ENCODE measurements at regions of chr19 and their contacts with region 1.

Region 1: DNA sequence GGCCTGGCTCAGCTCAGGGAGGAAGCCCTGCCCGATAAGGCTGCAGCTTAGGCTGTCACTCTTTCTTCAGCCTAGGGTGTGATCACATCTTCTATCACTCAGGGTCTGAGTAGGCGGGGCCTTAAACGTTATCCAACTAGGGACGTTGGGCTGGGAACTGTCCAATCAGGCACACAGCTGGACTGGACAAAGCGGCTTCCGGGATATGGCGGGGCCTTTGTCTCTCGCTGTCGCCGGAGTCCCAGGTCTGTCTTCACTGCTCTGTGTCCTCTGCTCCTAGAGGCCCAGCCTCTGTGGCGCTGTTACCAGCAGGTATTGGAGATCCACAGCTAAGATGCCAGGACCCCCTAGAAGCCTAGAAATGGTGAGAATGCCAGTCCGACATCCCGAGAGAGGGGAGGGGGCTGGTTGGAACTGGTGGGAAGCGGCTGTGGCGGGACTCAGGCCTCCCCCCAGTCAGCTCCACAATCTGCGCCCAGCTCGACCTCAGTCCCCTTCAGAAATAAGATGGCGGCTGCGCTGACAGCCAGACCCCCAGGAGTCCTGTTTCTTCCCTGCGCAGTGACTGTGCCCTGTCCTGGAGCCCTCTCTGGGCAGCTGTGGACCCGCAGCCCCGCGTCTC is at the start of gene ZNF254:
- DNase-seq: peak; percentile 96 to 99 (median 98)
- H3K4me3 ChIP-seq: peak within 1 kb of the TSS; percentile 84 to 97 (median 91)
- H3K27ac ChIP-seq: peak within 1 kb of the TSS; percentile 92 to 96
- H3K4me1 ChIP-seq: peaks cover 0 to 9% (median 5%) of the 10 kb centered on the region in 4 experiments
- H3K27me3 ChIP-seq: no peaks in the 10 kb centered on the region

Region 2: DNA sequence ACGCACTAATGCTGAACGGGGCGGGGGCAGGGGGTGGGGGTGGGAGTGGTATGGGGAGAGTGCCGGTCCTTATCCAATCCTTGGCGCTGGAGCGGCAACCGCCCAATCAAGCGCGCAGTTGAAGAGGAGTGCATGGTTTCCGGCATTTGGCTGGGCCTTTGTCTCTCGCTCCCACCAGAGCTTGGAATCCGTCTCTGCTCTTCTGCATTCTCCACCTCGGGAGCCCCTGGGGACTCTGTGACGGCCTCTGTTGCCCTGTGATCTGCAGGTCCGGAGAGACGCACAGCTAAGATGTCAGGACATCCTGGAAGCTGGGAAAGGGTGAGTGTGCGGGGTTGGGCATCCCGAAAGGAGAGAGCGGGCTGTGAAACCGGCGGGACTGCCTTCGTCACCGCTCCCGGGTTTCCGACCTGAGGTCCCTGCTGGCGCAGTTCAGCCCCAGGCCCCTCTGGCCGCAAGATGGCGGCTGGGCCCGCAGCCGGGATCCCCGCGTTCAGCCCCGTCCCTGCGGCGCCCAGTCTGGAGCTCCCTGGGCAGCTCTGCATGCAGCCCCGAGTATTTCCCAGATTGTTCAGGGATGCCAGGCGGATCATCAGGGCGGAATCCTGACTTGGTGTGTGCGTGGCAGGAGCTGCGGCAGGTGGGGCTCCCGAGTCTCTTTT is 53.7 kb before region 1 on chr19:
- CTCF ChIA-PET with region 1: interaction called, 3 read pairs
- POLR2A ChIA-PET with region 1: interaction called, 11 read pairs
- DNase-seq: peak; percentile 92 to 97 (median 96)
- H3K4me3 ChIP-seq: peak overlapping the region; percentile 81 to 94 (median 93)
- H3K27ac ChIP-seq: peak overlapping the region; percentile 92 to 97
- H3K4me1 ChIP-seq: peaks cover 0 to 25% (median 17%) of the 10 kb centered on the region in 4 experiments
- H3K27me3 ChIP-seq: no peaks in the 10 kb centered on the region

Region 3: GRCh38 chr19:24054549-24054935 is 32.5 kb before region 1 on chr19:
- CTCF ChIA-PET with region 1: no interaction called
- POLR2A ChIA-PET with region 1: no interaction called
- DNase-seq: no peak
- H3K4me3 ChIP-seq: no peak overlapping the region
- H3K27ac ChIP-seq: no peak overlapping the region
- H3K4me1 ChIP-seq: no peaks in the 10 kb centered on the region
- H3K27me3 ChIP-seq: no peaks in the 10 kb centered on the region

Region 4: DNA sequence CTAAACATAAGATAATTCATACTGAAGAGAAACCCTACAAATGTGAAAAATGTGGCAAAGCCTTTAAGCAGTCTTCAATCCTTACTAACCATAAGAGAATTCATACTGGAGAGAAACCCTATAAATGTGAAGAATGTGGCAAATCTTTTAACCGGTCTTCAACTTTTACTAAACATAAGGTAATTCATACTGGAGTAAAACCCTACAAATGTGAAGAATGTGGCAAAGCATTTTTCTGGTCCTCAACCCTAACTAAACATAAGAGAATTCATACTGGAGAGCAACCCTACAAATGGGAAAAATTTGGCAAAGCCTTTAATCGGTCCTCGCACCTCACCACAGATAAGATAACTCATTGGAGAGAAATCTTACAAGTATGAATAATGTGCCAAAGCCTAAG is 40.5 kb after region 1 on chr19:
- CTCF ChIA-PET with region 1: no interaction called
- POLR2A ChIA-PET with region 1: no interaction called
- DNase-seq: no peak
- H3K4me3 ChIP-seq: peak overlapping the region in 1 of 7 experiments; percentile 19
- H3K27ac ChIP-seq: no peak overlapping the region
- H3K4me1 ChIP-seq: no peaks in the 10 kb centered on the region
- H3K27me3 ChIP-seq: no peaks in the 10 kb centered on the region

Measured in common myeloid progenitor, CD34-positive (primary cell).